Transverse colon (tissue), 4 donors: ENCODE measurements at regions of chr4 and their contacts with region 1.

Region 1: GRCh38 chr4:106907216-106907615 is 128.9 kb downstream of the DKK2 start:
- DNase-seq: no peak
- H3K4me3 ChIP-seq: no peak overlapping the region
- H3K27ac ChIP-seq: no peak overlapping the region
- H3K4me1 ChIP-seq: no peaks in the 10 kb centered on the region
- H3K27me3 ChIP-seq: no peaks in the 10 kb centered on the region
- CTCF ChIP-seq: no peak
- EP300 ChIP-seq: no peak
- POLR2A ChIP-seq: no peak

Region 2: GRCh38 chr4:106929248-106929647 is 22.0 kb after region 1 on chr4:
- in situ Hi-C with region 1: no loop called
- intact Hi-C with region 1: loop called (anchors 1 kb)
- DNase-seq: no peak
- H3K4me3 ChIP-seq: no peak overlapping the region
- H3K27ac ChIP-seq: no peak overlapping the region
- H3K4me1 ChIP-seq: no peaks in the 10 kb centered on the region
- H3K27me3 ChIP-seq: no peaks in the 10 kb centered on the region
- CTCF ChIP-seq: no peak
- EP300 ChIP-seq: no peak
- POLR2A ChIP-seq: no peak